ENCODE measurements at regions of chr1 and their contacts with region 1.

Region 1: DNA sequence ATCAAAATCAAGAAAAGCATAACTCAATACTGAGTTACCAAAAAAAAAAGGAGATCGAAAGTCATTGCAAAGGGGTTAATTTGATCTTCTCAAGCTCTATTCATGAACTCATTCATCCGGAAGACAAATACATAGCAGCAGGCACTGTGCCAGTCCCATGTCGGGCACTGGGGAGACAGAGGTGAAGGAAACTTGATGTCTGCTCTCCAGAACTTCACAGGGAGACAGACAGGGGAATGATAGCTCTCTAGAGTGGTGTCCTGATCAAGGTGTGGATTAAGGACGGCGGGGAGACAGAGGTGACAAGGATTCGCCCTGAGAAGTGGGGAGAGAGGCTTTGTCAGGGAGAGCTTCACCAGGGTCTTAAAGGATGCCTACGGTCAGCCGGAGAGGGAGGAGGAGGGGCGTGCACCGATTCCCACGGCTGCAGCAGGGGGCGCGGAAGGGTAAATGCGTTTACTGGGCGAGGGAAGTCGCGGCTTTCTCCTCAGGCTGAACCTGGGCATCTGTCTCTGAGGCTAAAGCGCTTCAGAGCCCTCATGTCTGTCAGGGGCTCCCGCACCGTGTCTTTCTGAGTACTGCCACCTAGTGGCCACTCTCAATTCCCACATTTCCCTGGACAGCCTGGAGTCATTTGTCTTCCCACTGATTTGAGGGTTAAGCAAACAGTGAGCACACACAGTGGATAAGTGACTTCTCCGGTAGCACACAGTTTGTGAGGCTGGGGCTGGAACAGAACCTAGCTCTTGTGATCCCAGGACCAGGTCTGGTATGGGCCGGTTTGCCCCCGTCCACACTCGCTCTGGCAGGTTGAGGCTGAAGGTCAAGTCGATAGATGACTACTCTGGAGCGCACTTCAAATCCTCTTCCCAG is 152.8 kb downstream of the TENT5C start:
- DNase-seq: peak; percentile 38 to 81 (median 69)
- ATAC-seq: peak; percentile 87
- H3K4me3 ChIP-seq: peak overlapping the region; percentile 45 to 48
- H3K4me3 Mint-ChIP-seq: peak overlapping the region; percentile 79
- H3K27ac ChIP-seq: no peak overlapping the region
- H3K27ac Mint-ChIP-seq: no peak overlapping the region
- H3K4me1 ChIP-seq: no peaks in the 10 kb centered on the region
- H3K4me1 Mint-ChIP-seq: peaks cover 5% of the 10 kb centered on the region
- H3K27me3 ChIP-seq: no peaks in the 10 kb centered on the region
- H3K27me3 Mint-ChIP-seq: peaks cover 10% of the 10 kb centered on the region
- CTCF ChIP-seq: peak; percentile 86

Region 2: DNA sequence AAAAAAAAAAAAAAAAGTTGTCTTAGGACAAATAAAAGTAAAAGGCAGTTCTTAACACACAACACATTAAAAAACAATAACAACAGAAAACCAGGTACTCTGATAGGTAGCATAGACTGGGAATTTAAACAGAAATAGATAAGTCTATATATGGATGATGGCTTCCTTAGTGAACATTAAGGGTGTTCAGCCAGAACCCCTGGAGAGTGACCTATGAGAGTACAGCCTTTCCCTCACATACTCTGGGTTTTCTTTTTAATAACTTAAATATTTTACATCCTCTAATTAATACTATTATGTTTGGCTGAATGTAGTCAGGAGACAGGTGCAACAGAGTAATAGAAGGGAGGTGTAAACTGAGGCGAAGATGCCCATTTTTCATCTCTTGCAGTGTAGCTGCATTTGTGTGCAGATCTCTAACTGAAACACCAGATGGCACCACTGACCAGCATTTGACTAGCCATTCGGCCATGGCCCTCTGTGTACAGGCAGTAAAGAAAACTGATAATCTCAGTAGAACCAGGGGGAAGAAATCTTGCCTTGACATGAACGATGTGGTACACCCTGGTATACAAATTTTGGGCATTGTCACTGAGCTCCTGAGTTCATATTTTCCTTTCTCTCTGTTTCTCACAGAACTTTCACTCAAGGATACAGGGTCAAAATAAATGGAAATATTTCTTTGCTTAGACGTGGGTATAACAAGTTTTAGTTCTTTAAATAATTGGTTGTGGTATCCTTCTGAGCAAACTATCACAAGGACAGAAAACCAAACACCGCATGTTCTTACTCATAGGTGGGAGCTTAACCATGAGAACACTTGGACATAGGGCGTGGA is 690.9 kb before region 1 on chr1:
- CTCF ChIA-PET with region 1: interaction called, 6 read pairs
- POLR2A ChIA-PET with region 1: no interaction called
- intact Hi-C with region 1: loop called (anchors 2 to 5 kb)
- DNase-seq: peak in 6 of 9 experiments; percentile 23 to 53 (median 39)
- ATAC-seq: peak; percentile 75
- H3K4me3 ChIP-seq: no peak overlapping the region
- H3K4me3 Mint-ChIP-seq: no peak overlapping the region
- H3K27ac ChIP-seq: no peak overlapping the region
- H3K27ac Mint-ChIP-seq: no peak overlapping the region
- H3K4me1 ChIP-seq: no peaks in the 10 kb centered on the region
- H3K4me1 Mint-ChIP-seq: peaks cover 19% of the 10 kb centered on the region
- H3K27me3 ChIP-seq: no peaks in the 10 kb centered on the region
- H3K27me3 Mint-ChIP-seq: no peaks in the 10 kb centered on the region
- CTCF ChIP-seq: peak; percentile 55

Region 3: GRCh38 chr1:117339866-117340700 is 418.6 kb before region 1 on chr1:
- CTCF ChIA-PET with region 1: interaction called, 3 read pairs
- POLR2A ChIA-PET with region 1: no interaction called
- intact Hi-C with region 1: loop called in 1 of 2 experiments (anchors 10 kb)
- DNase-seq: peak in 3 of 9 experiments; percentile 36 to 66 (median 61)
- ATAC-seq: peak; percentile 90
- H3K4me3 ChIP-seq: no peak overlapping the region
- H3K4me3 Mint-ChIP-seq: no peak overlapping the region
- H3K27ac ChIP-seq: no peak overlapping the region
- H3K27ac Mint-ChIP-seq: no peak overlapping the region
- H3K4me1 ChIP-seq: no peaks in the 10 kb centered on the region
- H3K4me1 Mint-ChIP-seq: peaks cover 22% of the 10 kb centered on the region
- H3K27me3 ChIP-seq: no peaks in the 10 kb centered on the region
- H3K27me3 Mint-ChIP-seq: no peaks in the 10 kb centered on the region
- CTCF ChIP-seq: no peak

Region 4: DNA sequence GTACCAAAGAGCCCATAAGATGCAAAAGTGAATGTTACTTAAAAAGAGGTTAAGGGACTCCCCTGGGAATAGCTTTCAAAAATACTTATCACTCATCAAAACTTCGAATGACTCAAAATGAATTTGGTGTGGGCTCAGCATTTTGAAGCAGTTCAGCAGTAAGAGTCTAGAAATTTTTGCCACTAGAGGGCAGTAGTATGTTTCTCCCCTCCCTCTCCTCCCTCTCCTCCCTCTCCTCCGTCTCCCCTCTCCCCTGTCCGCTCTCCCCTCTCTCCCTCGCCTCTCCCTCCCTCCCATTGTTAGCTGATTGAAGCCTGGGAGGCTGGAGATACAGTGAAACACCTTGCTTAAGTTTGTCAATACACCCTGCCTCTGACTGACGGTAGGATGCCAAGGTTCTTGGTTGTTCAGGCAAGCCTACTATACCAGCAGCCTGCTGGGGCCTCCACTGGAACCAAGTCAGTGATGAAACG is 223.6 kb before region 1 on chr1:
- CTCF ChIA-PET with region 1: interaction called, 214 read pairs
- POLR2A ChIA-PET with region 1: interaction called, 3 read pairs
- intact Hi-C with region 1: loop called (anchors 1 kb)
- DNase-seq: peak in 8 of 9 experiments; percentile 8 to 79 (median 32)
- ATAC-seq: peak; percentile 89
- H3K4me3 ChIP-seq: no peak overlapping the region
- H3K4me3 Mint-ChIP-seq: no peak overlapping the region
- H3K27ac ChIP-seq: no peak overlapping the region
- H3K27ac Mint-ChIP-seq: no peak overlapping the region
- H3K4me1 ChIP-seq: peaks cover 13% of the 10 kb centered on the region
- H3K4me1 Mint-ChIP-seq: peaks cover 2% of the 10 kb centered on the region
- H3K27me3 ChIP-seq: no peaks in the 10 kb centered on the region
- H3K27me3 Mint-ChIP-seq: no peaks in the 10 kb centered on the region
- CTCF ChIP-seq: peak; percentile 61

Region 5: DNA sequence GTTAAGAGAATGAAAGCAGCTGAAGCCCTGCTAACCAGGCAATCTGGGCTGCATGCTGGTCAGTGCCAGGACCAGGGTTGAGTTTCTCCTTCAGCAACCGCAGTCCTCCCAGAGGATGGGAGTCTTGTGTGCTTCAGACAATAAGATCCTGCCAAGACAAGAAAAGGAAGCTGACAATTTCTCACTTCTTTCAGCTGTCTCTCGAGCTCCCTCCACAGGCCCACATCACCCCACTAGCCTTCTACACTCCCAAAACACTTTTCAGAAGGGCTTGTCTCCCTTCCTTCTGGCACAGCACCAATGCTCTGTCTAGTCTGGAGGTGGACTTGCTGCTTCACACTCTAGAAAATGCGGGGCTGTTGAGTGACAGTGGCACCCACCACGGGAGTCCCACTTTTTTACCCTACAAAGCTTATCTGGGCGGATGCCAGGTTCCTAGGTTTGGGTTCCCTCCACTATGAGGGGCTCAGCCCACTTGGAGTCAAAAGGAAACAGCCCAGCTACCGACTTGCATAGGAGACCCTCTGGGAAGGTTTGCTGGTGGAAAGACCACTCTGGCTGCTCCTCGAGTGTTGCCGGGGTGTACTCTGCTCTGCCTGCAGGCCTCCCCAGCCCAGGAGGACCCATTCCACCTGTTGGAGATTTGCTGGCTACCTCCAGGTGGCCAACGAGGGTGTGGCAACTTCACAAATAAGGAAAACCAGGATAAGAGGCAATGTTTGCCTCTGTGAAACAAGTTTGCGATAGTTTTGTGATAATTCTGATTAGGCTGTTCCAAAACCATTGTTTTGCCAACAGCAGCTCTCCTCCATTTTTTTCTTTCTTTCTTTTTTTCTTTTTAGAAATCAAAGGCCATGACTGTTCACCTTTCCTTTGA is 83.9 kb before region 1 on chr1:
- CTCF ChIA-PET with region 1: interaction called, 23 read pairs
- POLR2A ChIA-PET with region 1: interaction called, 3 read pairs
- intact Hi-C with region 1: loop called (anchors 2 to 5 kb)
- DNase-seq: peak in 8 of 9 experiments; percentile 34 to 83 (median 67)
- ATAC-seq: peak; percentile 86
- H3K4me3 ChIP-seq: no peak overlapping the region
- H3K4me3 Mint-ChIP-seq: no peak overlapping the region
- H3K27ac ChIP-seq: no peak overlapping the region
- H3K27ac Mint-ChIP-seq: no peak overlapping the region
- H3K4me1 ChIP-seq: no peaks in the 10 kb centered on the region
- H3K4me1 Mint-ChIP-seq: peaks cover 6% of the 10 kb centered on the region
- H3K27me3 ChIP-seq: no peaks in the 10 kb centered on the region
- H3K27me3 Mint-ChIP-seq: peaks cover 14% of the 10 kb centered on the region
- CTCF ChIP-seq: peak; percentile 58

Region 6: DNA sequence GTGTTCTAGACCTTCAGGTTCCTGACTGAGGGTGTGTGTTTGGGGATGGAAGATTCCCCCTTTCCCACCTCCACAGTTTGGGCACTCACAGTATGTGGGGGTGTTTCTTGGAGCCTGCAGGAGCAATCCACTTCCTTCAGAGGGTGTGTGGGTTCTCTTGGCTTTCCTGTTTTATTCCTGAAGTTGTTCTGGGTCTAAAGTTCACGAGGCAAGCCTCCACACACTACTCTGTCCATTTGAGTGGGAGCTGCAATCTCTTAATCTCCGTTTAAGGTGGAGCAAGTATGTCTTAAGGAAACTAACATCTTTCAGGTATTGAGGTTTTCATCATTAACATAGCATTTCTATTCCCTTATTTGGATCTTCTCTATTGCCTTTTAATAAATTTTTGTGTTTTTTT is 11.1 kb before region 1 on chr1:
- CTCF ChIA-PET with region 1: interaction called, 13 read pairs
- POLR2A ChIA-PET with region 1: interaction called, 3 read pairs
- intact Hi-C with region 1: no loop called
- DNase-seq: no peak
- ATAC-seq: no peak
- H3K4me3 ChIP-seq: no peak overlapping the region
- H3K4me3 Mint-ChIP-seq: no peak overlapping the region
- H3K27ac ChIP-seq: no peak overlapping the region
- H3K27ac Mint-ChIP-seq: no peak overlapping the region
- H3K4me1 ChIP-seq: no peaks in the 10 kb centered on the region
- H3K4me1 Mint-ChIP-seq: no peaks in the 10 kb centered on the region
- H3K27me3 ChIP-seq: no peaks in the 10 kb centered on the region
- H3K27me3 Mint-ChIP-seq: peaks cover 27% of the 10 kb centered on the region
- CTCF ChIP-seq: no peak

Region 7: DNA sequence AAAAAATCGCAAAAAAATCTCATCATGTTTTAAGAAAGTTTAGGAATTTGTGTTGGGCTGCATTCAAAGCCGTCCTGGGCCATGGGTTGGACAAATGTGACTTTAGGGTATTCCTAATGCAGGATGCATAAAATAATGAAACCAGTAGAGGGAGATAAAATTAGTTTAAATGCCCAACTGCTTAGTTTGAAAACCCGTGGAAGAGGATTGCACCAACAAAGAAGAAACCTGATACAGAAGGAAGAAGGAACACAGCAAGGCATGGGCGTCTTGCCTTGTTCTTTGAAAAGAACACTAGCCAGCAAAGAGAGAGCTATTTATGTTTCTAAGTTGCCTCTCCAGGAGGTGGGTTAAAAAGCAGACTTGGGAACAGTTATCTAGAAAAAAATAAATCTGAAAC is 208.8 kb after region 1 on chr1:
- CTCF ChIA-PET with region 1: no interaction called
- POLR2A ChIA-PET with region 1: no interaction called
- intact Hi-C with region 1: no loop called
- DNase-seq: no peak
- ATAC-seq: no peak
- H3K4me3 ChIP-seq: no peak overlapping the region
- H3K4me3 Mint-ChIP-seq: no peak overlapping the region
- H3K27ac ChIP-seq: no peak overlapping the region
- H3K27ac Mint-ChIP-seq: no peak overlapping the region
- H3K4me1 ChIP-seq: no peaks in the 10 kb centered on the region
- H3K4me1 Mint-ChIP-seq: no peaks in the 10 kb centered on the region
- H3K27me3 ChIP-seq: no peaks in the 10 kb centered on the region
- H3K27me3 Mint-ChIP-seq: no peaks in the 10 kb centered on the region
- CTCF ChIP-seq: no peak

Measured in CD8-positive, alpha-beta T cell (primary cell).